ENCODE measurements at regions of chr6 and their contacts with region 1.

Region 1: GRCh38 chr6:27332692-27333641 is 20.9 kb upstream of the POM121L2 start:
- DNase-seq: peak in 13 of 14 experiments; percentile 8 to 75 (median 39)
- ATAC-seq: peak; percentile 88
- H3K4me3 ChIP-seq: peak overlapping the region; percentile 51
- H3K4me3 Mint-ChIP-seq: peak overlapping the region; percentile 92
- H3K27ac ChIP-seq: no peak overlapping the region
- H3K27ac Mint-ChIP-seq: peak overlapping the region; percentile 91
- H3K4me1 ChIP-seq: peaks cover 7% of the 10 kb centered on the region
- H3K4me1 Mint-ChIP-seq: peaks cover 21% of the 10 kb centered on the region
- H3K27me3 ChIP-seq: peaks cover 2 to 44% of the 10 kb centered on the region in 2 experiments
- H3K27me3 Mint-ChIP-seq: peaks cover 58% of the 10 kb centered on the region
- CTCF ChIP-seq: no peak

Region 2: DNA sequence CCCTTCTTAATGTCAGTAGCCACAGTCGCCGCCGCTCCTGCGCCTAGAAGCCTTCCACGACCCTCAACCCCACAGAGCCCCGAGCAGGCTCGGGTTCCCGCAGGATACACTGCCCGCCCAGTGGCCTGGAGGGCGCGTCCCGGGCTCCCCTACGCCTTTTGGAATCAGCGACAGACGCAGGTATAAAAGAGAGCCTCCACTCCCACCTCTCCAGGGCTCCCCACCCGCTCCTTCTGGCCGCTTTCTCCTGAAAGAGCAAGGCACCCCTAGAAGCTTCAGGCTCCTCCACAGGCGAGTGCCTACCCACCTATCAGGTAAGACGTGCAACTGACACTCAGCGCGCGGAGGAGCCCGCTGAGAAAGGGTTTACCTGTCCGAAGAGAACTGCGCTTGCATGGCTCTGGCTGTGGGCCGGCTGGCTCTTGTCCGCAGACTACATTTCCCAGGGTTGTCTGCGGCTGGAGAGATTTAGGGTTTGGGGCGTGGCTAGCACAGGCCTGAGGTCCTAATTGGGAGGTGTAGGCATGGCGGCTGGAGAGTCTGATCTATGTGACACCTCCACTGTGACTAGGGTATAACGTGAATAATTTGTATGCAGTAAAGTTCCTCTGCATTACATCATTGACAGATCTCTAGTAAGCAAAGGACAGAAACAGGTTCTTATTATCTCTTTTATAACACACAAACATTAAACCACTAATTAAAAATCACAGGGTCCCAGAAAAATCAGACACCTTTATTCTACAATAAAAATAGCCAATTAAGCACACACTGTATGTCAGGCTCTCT is 42.1 kb after region 1 on chr6:
- CTCF ChIA-PET with region 1: no interaction called
- POLR2A ChIA-PET with region 1: no interaction called
- intact Hi-C with region 1: no loop called
- DNase-seq: peak; percentile 48 to 88 (median 64)
- ATAC-seq: peak; percentile 95
- H3K4me3 ChIP-seq: peak overlapping the region; percentile 66
- H3K4me3 Mint-ChIP-seq: peak overlapping the region; percentile 92
- H3K27ac ChIP-seq: no peak overlapping the region
- H3K27ac Mint-ChIP-seq: peak overlapping the region; percentile 81
- H3K4me1 ChIP-seq: peaks cover 11% of the 10 kb centered on the region
- H3K4me1 Mint-ChIP-seq: peaks cover 33% of the 10 kb centered on the region
- H3K27me3 ChIP-seq: no peaks in the 10 kb centered on the region
- H3K27me3 Mint-ChIP-seq: peaks cover 7% of the 10 kb centered on the region
- CTCF ChIP-seq: no peak

Region 3: GRCh38 chr6:27503436-27504030 is 170.6 kb after region 1 on chr6:
- CTCF ChIA-PET with region 1: no interaction called
- POLR2A ChIA-PET with region 1: no interaction called
- intact Hi-C with region 1: loop called in 1 of 2 experiments (anchors 1 kb)
- DNase-seq: peak; percentile 59 to 89 (median 75)
- ATAC-seq: peak; percentile 58
- H3K4me3 ChIP-seq: peak overlapping the region; percentile 62
- H3K4me3 Mint-ChIP-seq: peak overlapping the region; percentile 95
- H3K27ac ChIP-seq: peak overlapping the region; percentile 2 to 33
- H3K27ac Mint-ChIP-seq: peak overlapping the region; percentile 94
- H3K4me1 ChIP-seq: peaks cover 15% of the 10 kb centered on the region
- H3K4me1 Mint-ChIP-seq: peaks cover 46% of the 10 kb centered on the region
- H3K27me3 ChIP-seq: peaks cover 0 to 11% of the 10 kb centered on the region in 2 experiments
- H3K27me3 Mint-ChIP-seq: peaks cover 40% of the 10 kb centered on the region
- CTCF ChIP-seq: no peak

Measured in CD4-positive, alpha-beta T cell (primary cell).